ENCODE measurements at regions of chr16 and their contacts with region 1.

Region 1: GRCh38 chr16:4253394-4254150 is 11.7 kb upstream of the SRL start:
- DNase-seq: peak; percentile 100
- H3K4me3 Mint-ChIP-seq: peak overlapping the region; percentile 97
- H3K27ac Mint-ChIP-seq: peak overlapping the region; percentile 96
- H3K4me1 Mint-ChIP-seq: peaks cover 5% of the 10 kb centered on the region
- H3K27me3 Mint-ChIP-seq: no peaks in the 10 kb centered on the region

Region 2: GRCh38 chr16:3938848-3939624 is 314.5 kb before region 1 on chr16:
- CTCF ChIA-PET with region 1: interaction called, 43 read pairs
- POLR2A ChIA-PET with region 1: no interaction called
- intact Hi-C with region 1: loop called (anchors 2 kb)
- DNase-seq: peak; percentile 66
- H3K4me3 Mint-ChIP-seq: no peak overlapping the region
- H3K27ac Mint-ChIP-seq: no peak overlapping the region
- H3K4me1 Mint-ChIP-seq: peaks cover 3% of the 10 kb centered on the region
- H3K27me3 Mint-ChIP-seq: peaks cover 1% of the 10 kb centered on the region

Region 3: DNA sequence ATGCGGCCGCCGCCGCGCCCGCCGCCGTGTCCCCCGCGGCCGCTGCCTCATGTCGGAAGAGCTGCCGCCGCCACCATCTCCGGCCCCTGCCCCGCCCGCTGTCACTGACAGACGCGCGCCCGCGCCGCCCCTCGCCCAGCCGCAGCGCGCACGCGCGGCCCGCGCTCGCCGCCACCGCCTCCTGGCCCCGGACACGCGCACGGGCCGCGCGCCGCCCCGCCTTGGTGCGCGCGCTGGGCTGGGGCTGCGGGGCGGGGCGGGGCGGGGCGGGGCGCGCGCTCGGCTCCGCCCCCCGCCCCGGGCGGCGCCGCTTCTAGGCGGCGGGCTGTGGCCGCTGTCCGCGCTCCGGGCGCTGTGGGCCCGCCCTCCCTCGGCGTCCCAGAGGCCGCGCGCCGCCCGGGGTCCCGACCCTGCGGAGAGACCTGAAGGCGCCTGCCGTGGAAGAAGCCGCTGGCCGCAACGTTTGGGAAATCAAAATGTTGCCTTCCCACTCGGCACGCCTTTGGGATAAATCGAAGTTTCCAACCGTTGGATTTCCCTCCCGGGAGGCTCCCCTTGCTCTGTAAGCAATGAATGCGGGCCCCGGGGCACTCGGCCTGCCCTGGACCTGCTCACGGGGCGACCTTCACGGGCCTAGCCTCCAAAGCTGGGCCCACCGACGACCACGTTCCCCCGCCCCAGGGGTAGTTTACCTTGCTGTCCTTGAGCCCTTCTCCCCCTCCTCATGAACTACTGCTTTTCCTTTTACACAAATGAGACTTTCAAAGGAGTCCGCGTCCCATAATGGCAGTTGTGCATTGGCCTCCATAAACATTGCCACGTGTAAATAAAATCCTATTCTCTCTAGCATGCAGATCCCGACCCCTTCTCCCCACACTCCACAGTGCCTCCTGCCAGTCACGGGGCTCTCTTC is 137.0 kb before region 1 on chr16 and contains the start of gene ADCY9:
- CTCF ChIA-PET with region 1: interaction called, 20 read pairs
- POLR2A ChIA-PET with region 1: interaction called, 10 read pairs
- intact Hi-C with region 1: loop called (anchors 1 kb)
- DNase-seq: peak; percentile 79
- H3K4me3 Mint-ChIP-seq: peak within 1 kb of the TSS; percentile 72
- H3K27ac Mint-ChIP-seq: no peak within 1 kb of the TSS
- H3K4me1 Mint-ChIP-seq: peaks cover 36% of the 10 kb centered on the region
- H3K27me3 Mint-ChIP-seq: no peaks in the 10 kb centered on the region
- total RNA-seq, gene ADCY9: 3.8 to 4.9 TPM

Region 4: DNA sequence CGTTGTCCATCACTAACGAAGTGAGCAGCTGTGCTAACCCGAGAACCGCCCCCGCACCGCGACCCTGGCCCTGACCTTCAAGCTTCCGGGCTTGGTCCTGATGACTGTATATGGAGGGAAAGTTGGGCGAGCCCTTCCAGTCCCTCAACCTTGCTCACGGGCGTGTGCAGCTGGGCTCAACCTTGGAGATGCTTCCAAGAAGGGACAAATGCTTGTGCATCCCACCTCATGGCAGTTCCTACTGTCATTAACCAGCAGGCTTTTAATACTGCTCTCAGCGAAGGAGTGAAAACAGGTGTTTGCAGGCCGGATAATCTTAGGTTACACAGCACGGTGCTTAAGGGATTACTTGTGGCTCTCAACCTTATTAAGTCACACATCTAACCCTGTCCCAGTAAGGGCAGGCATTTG is 45.2 kb before region 1 on chr16:
- CTCF ChIA-PET with region 1: no interaction called
- POLR2A ChIA-PET with region 1: no interaction called
- intact Hi-C with region 1: no loop called
- DNase-seq: no peak
- H3K4me3 Mint-ChIP-seq: no peak overlapping the region
- H3K27ac Mint-ChIP-seq: no peak overlapping the region
- H3K4me1 Mint-ChIP-seq: peaks cover 15% of the 10 kb centered on the region
- H3K27me3 Mint-ChIP-seq: no peaks in the 10 kb centered on the region

Region 5: DNA sequence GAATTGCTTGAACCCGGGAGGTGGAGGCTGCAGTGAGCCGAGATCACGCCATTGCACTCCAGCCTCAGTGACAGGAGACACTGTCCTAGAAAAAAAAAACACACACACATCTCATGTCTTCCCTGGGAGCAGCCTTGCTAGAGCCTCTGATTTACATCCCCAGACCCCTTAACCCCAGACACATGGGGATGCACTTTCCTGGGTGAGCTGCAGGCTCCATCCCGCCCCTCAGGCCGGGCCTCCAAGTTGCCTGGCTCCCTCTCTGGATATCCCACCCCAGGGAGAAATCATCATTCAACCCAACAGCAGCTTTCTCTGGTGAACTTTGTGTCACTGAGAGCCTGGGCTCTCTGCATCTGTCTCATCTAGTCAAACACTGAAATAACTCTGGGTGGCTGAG is 33.2 kb before region 1 on chr16:
- CTCF ChIA-PET with region 1: no interaction called
- POLR2A ChIA-PET with region 1: no interaction called
- intact Hi-C with region 1: no loop called
- DNase-seq: no peak
- H3K4me3 Mint-ChIP-seq: no peak overlapping the region
- H3K27ac Mint-ChIP-seq: no peak overlapping the region
- H3K4me1 Mint-ChIP-seq: no peaks in the 10 kb centered on the region
- H3K27me3 Mint-ChIP-seq: peaks cover 4% of the 10 kb centered on the region

Region 6: DNA sequence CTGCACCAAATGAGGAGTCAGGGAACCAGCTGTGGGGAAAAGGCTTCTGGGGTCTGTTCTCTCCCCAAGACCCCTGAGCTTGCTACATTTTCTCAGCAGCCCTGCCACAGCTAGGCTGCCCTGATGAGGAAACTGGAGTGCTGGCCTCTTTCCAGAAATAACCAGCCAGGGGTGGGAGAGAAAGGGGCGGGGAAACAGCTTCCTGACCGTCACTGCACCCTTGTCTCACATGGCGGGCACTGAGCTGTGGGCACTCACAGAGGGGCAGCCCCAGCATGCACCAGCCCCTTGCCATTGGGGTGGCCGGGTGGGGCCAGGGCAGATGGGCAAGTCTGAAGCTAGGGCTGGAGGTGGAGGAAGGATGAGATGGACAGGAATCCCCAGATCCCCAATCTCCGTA is 14.6 kb before region 1 on chr16:
- CTCF ChIA-PET with region 1: interaction called, 15 read pairs
- POLR2A ChIA-PET with region 1: interaction called, 4 read pairs
- intact Hi-C with region 1: no loop called
- DNase-seq: no peak
- H3K4me3 Mint-ChIP-seq: no peak overlapping the region
- H3K27ac Mint-ChIP-seq: no peak overlapping the region
- H3K4me1 Mint-ChIP-seq: no peaks in the 10 kb centered on the region
- H3K27me3 Mint-ChIP-seq: peaks cover 13% of the 10 kb centered on the region

Region 7: GRCh38 chr16:4307215-4308037 is 53.9 kb after region 1 on chr16:
- CTCF ChIA-PET with region 1: interaction called, 33 read pairs
- POLR2A ChIA-PET with region 1: interaction called, 5 read pairs
- intact Hi-C with region 1: loop called (anchors 2 kb)
- DNase-seq: peak; percentile 97
- H3K4me3 Mint-ChIP-seq: peak overlapping the region; percentile 90
- H3K27ac Mint-ChIP-seq: peak overlapping the region; percentile 90
- H3K4me1 Mint-ChIP-seq: peaks cover 33% of the 10 kb centered on the region
- H3K27me3 Mint-ChIP-seq: no peaks in the 10 kb centered on the region

Region 8: GRCh38 chr16:4350787-4351659 is 97.5 kb after region 1 on chr16 and contains the start of gene PAM16:
- CTCF ChIA-PET with region 1: interaction called, 18 read pairs
- POLR2A ChIA-PET with region 1: no interaction called
- intact Hi-C with region 1: no loop called
- DNase-seq: peak; percentile 99
- H3K4me3 Mint-ChIP-seq: peak within 1 kb of the TSS; percentile 97
- H3K27ac Mint-ChIP-seq: peak within 1 kb of the TSS; percentile 89
- H3K4me1 Mint-ChIP-seq: peaks cover 29% of the 10 kb centered on the region
- H3K27me3 Mint-ChIP-seq: no peaks in the 10 kb centered on the region
- total RNA-seq, gene PAM16: 52.8 to 63.4 TPM

Region 9: DNA sequence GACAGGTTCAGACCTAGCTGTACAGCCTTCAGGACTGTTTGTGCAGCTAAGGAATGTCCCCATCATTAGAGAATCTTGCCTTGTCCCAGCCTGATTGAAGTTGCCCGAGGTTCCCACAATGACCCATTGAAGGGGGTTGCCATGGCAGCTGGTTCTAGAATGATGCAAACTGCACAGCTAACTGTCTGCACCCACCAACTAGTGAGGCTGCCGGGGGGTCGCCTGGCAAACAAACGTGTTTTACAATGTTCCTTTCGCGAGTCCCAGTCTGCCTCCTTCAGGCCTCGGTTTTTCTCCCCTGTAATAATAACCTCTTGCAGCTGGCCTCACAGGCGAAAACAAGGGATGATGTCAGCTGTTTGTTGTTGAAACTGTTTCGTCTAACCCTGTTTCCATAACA is 308.0 kb after region 1 on chr16:
- CTCF ChIA-PET with region 1: no interaction called
- POLR2A ChIA-PET with region 1: no interaction called
- intact Hi-C with region 1: no loop called
- DNase-seq: no peak
- H3K4me3 Mint-ChIP-seq: no peak overlapping the region
- H3K27ac Mint-ChIP-seq: no peak overlapping the region
- H3K4me1 Mint-ChIP-seq: peaks cover 7% of the 10 kb centered on the region
- H3K27me3 Mint-ChIP-seq: no peaks in the 10 kb centered on the region

Region 10: GRCh38 chr16:4616047-4616811 is 362.7 kb after region 1 on chr16:
- CTCF ChIA-PET with region 1: interaction called, 3 read pairs
- POLR2A ChIA-PET with region 1: no interaction called
- intact Hi-C with region 1: loop called (anchors 10 kb)
- DNase-seq: peak; percentile 100
- H3K4me3 Mint-ChIP-seq: peak overlapping the region; percentile 88
- H3K27ac Mint-ChIP-seq: peak overlapping the region; percentile 95
- H3K4me1 Mint-ChIP-seq: peaks cover 23% of the 10 kb centered on the region
- H3K27me3 Mint-ChIP-seq: no peaks in the 10 kb centered on the region

Measured in activated CD4-positive, alpha-beta memory T cell treated with anti-CD3 and anti-CD28 coated beads for 36 hours (primary cell).